Activated T-helper 2 cell treated with anti-CD3 and anti-CD28 coated beads, Interferon-gamma antibody, Interleukin-2, Interleukin-4, amounts not matched to agents 10 μg/mL and 5 μg/mL and 100 μg/mL, durations not matched to agents 14 hours and 24 hours and 36 hours (primary cell): ENCODE measurements at regions of chr1 and their contacts with region 1.

Region 1: GRCh38 chr1:156892190-156893047 is 1.1 kb upstream of the PEAR1 start:
- DNase-seq: peak; percentile 80
- H3K4me3 Mint-ChIP-seq: peak overlapping the region; percentile 35
- H3K27ac Mint-ChIP-seq: no peak overlapping the region
- H3K4me1 Mint-ChIP-seq: peaks cover 11% of the 10 kb centered on the region
- H3K27me3 Mint-ChIP-seq: peaks cover 32% of the 10 kb centered on the region

Region 2: DNA sequence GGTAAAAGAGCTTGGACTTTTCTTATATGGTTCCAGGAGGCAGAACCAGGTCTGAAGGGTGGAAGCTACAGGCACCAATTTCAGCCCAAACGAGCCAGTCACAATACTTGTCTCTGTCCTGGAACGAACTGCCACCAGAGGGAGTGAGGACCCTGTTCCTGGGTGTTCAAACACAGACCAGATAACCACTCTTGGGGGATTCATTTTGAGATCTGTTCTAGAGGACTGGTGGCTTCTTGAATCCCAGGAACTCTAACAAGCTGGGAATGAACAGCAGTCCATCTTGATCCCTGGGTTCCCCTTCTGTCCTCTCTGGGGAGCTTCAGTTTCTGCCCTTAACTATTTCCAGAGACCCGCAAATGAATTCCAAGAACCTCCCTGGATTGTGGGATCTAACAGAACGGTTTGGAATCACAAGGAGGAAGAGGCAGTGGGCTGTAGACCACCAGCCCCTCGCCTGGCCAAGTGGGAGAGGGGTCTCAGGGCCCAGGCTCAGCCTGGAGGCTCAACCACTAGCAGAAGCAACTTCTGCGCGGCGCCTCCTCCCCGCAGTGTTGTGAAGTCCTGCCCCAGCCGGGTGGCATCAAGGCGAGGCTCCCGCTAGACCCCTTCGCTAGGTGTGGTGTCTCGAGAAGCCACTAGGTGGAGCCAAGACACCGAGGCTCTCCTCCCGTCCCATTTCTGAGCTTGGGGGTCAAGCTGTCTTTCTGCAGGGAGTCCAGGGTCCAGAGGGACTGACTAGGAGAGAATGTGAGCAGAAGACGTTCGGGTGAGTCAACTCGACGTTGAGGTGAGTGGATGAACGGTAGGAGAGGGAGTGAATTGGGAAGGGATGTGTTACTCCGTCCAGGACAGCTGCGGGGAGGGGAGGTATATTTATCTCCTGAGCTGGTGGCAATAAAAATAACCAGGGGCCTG is 203.1 kb before region 1 on chr1:
- intact Hi-C with region 1: loop called (anchors 10 kb)
- DNase-seq: peak; percentile 57
- H3K4me3 Mint-ChIP-seq: no peak overlapping the region
- H3K27ac Mint-ChIP-seq: no peak overlapping the region
- H3K4me1 Mint-ChIP-seq: peaks cover 20% of the 10 kb centered on the region
- H3K27me3 Mint-ChIP-seq: peaks cover 51% of the 10 kb centered on the region

Region 3: DNA sequence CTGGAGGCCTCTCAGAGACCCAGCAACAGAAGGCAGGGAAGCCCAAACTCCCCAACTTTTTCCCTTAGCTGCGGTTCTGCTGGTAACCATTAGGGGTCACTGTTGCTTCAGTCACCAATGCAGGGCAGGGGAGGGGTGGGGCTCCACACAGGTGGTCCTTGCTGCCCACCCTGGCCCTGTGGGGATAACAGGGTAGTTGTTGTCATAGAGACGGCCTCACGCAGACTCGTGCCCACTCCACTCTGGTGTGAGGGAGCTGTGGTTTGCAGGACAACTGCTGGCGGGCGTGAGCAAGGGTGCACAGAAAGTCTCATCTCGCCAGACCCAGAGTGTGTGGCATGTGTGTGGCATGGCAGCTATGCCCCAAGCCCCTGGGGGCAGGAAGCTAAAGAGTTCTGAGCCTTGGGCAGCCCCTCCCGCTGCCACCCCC is 53.4 kb before region 1 on chr1:
- intact Hi-C with region 1: loop called (anchors 2 kb)
- DNase-seq: peak; percentile 36
- H3K4me3 Mint-ChIP-seq: no peak overlapping the region
- H3K27ac Mint-ChIP-seq: peak overlapping the region; percentile 69
- H3K4me1 Mint-ChIP-seq: peaks cover 46% of the 10 kb centered on the region
- H3K27me3 Mint-ChIP-seq: peaks cover 23% of the 10 kb centered on the region

Region 4: GRCh38 chr1:156860113-156860627 is 32.2 kb before region 1 on chr1:
- intact Hi-C with region 1: loop called (anchors 1 kb)
- DNase-seq: peak; percentile 48
- H3K4me3 Mint-ChIP-seq: peak overlapping the region; percentile 87
- H3K27ac Mint-ChIP-seq: peak overlapping the region; percentile 44
- H3K4me1 Mint-ChIP-seq: peaks cover 44% of the 10 kb centered on the region
- H3K27me3 Mint-ChIP-seq: peaks cover 27% of the 10 kb centered on the region

Region 5: DNA sequence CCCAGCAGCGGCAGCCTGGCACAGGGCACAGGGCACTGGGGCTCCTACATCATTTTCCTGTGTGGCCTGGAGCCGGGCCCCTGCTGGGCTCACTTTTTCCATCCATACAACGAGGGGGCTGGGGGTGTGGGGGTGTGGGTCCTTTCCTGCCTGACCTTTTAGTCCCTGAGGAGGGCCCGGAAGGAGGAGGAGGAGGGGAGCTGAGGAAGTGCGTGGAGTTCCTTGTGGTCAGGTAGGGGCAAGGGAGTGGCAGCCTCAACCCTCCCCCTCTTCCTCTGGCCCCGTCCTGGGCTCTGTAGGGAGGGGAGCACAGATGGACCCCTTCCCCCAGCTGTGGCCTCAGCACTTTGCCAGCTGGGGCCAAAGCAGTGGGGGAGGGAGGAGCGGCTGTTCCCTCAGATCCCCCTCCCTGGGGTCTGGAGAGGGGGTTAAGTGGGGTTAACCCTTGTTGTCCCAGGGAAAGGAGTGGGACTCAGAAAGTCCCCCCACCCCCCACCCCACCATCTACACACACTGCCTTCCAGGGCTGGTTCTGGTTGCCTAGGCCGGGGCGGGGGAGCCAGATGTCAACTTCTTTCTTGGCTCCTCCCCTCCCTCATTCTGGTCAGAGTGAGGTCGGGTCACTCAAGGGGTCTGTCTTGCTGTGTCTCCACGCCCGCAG is 26.0 kb before region 1 on chr1:
- intact Hi-C with region 1: loop called (anchors 1 kb)
- DNase-seq: no peak
- H3K4me3 Mint-ChIP-seq: peak overlapping the region; percentile 87
- H3K27ac Mint-ChIP-seq: peak overlapping the region; percentile 88
- H3K4me1 Mint-ChIP-seq: peaks cover 76% of the 10 kb centered on the region
- H3K27me3 Mint-ChIP-seq: no peaks in the 10 kb centered on the region

Region 6: DNA sequence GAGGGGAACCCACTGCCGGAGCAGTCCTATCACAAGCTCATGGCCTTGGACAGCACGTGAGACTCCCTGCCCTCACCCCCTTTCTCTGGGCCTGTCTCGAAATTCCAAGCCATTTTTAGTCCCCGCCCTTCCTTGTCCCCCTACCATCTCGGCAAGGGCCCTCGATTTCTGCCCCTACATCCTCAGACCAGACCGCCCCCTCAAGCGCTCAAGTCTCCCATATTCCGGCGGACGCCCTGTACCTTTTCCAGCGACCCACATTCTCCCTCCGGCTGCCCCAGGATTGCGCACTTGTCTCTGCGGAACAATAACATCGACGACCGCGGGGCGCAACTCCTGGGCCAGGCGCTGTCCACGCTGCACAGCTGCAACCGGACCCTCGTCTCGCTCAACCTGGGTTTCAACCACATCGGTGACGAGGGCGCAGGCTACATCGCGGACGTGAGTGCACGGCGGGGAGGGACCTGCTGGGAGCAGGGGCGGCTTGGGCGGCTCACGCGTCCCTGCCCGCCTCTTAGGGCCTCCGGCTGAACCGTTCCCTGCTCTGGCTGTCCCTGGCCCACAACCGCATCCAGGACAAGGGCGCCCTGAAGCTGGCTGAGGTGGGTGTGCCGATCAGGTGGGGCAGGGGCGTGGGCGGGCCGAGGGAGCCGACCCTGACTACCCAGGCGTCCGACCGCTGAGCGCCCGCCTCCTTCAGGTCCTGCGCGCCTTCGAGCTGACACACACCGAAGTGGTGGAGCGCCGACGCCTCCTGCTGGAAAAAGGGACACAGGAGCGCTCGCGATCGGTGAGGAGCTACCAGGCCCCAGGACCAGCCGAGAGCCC is 35.0 kb after region 1 on chr1:
- intact Hi-C with region 1: loop called (anchors 1 kb)
- DNase-seq: peak; percentile 60
- H3K4me3 Mint-ChIP-seq: peak overlapping the region; percentile 23
- H3K27ac Mint-ChIP-seq: no peak overlapping the region
- H3K4me1 Mint-ChIP-seq: peaks cover 26% of the 10 kb centered on the region
- H3K27me3 Mint-ChIP-seq: peaks cover 76% of the 10 kb centered on the region